CD4-positive, alpha-beta memory T cell (primary cell): ENCODE measurements at regions of chr20 and their contacts with region 1.

Region 1: DNA sequence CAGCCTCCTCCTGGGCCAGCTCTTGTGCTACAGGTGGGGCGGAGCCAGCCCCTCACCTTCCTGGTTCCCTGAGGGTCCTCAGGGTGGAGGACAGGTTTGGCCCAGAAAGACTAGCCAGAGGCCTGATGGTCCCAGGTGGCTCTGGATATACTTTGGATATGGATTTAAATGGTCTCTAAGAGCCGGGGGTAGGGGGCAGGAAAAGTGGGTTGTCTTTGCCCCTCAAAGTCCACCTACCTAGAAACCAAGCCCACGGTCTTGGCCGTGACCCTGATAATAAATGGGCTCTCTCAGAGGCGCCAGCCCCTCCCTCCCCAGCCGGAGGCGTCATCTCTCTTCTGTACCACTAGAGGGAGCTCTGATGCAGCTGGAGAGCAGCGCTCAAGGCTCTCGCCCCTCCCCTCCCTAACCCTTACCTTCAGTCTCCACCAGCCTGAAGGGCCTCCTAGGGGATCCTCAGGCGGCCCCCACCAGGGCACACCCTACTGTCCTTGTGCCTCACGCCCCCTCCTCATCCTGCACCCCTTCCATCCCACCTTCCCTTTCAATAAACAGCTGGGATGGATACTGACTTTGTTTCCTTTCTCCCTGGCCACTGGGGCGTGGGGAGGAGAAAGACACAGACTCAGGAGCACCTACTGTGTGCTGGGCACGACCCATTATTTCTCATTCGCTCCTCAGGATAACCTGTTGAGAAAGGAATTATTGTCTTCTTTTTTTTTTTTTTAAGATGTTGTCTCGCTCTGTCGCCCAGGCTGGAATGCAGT is 7.6 kb downstream of the NRSN2 start:
- DNase-seq: peak; percentile 76 to 83 (median 81)
- H3K4me3 ChIP-seq: no peak overlapping the region
- H3K4me3 Mint-ChIP-seq: peak overlapping the region in 1 of 8 donors; percentile 20
- H3K27ac ChIP-seq: no peak overlapping the region
- H3K27ac Mint-ChIP-seq: no peak overlapping the region
- H3K4me1 ChIP-seq: no peaks in the 10 kb centered on the region
- H3K4me1 Mint-ChIP-seq: peaks cover 0 to 7% (median 4%) of the 10 kb centered on the region in 4 donors
- H3K27me3 ChIP-seq: no peaks in the 10 kb centered on the region
- H3K27me3 Mint-ChIP-seq: no peaks in the 10 kb centered on the region

Region 2: DNA sequence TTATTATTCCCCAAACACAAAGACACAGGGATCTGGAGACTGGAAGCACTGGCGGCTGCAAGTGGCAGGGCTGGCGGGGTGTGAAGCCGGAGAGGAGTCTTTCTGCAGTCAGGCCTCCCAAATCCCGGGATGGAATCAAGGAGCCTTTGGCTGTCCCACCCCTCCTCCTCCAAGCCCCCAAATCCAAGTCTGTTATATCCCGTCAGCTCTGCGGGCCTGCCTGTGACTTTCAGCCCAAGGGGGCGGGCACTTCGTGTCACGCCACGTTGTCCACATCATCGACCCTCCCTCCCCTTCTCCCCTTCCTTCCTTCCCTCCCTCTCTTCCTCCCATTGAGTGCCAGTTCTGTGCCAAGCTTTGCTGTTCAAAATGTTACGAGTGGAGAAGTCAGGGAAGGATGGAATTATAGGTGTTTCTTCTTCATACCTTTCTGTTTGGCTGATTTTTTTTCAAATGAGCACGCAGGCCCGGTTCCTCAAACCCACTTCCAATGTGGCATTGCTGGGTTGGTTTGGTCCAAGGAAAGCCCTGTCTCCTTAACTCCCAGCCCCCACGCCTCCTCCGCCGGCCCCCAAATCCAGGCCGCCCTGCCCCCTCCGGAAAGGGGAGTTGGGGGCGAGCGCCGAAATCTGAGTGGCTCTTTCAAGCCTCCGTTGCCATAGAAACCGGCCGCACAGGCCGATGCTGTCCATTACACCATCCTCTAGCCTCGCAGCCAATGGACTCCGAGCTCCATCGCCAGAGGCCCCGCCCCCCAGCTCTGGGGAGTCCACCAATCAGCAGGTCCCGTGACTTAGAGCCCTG is 44.4 kb before region 1 on chr20:
- CTCF ChIA-PET with region 1: no interaction called
- POLR2A ChIA-PET with region 1: no interaction called
- intact Hi-C with region 1: no loop called
- DNase-seq: peak; percentile 56 to 74 (median 59)
- H3K4me3 ChIP-seq: no peak overlapping the region
- H3K4me3 Mint-ChIP-seq: peak overlapping the region; percentile 49 to 78 (median 68)
- H3K27ac ChIP-seq: no peak overlapping the region
- H3K27ac Mint-ChIP-seq: peak overlapping the region in 5 of 7 donors; percentile 36 to 80 (median 49)
- H3K4me1 ChIP-seq: peaks cover 12% of the 10 kb centered on the region
- H3K4me1 Mint-ChIP-seq: peaks cover 10 to 12% (median 10%) of the 10 kb centered on the region in 4 donors
- H3K27me3 ChIP-seq: no peaks in the 10 kb centered on the region
- H3K27me3 Mint-ChIP-seq: peaks cover 0 to 1% of the 10 kb centered on the region in 2 donors

Region 3: DNA sequence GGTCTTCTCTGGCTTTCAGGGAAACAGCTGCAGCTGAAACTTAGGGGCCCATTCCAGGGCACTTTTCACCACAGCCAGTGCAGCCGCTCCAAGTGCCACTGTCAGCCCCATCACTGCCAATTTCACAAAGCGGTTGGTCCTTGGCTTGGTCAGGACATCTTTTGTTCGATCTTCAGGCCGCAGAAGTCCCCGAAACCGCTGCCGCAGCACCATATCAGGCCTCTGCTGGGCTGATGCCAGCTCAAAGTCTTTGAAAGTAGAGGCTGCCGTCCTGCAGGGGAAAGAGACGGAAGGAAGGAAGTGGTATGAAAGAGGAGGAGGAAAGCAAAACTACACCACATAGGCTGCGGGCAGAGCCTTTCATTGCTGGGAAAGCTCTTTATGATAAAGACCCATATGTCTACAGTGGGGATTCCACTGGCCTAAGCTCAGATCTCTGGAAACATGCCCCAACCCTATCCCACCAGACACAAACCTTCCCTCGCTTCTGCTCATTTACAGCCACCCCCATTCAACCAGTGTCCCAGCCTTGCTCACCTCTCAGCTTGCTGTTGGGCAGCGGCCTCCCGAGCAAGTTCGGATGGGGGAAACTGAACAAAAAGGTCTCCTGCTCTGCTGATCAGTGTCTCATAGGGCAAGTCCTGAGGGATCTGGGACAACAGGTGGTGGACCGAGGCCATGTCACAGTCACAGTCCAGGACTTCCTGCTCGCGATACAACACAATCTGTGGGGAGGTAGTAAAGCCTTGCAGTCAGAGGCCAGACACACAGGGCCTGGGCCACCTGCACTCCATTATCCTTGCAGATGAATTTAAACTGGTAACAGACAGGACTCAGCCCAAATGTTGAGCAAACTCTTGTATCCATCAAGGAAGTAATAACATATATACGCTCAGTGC is 84.3 kb after region 1 on chr20:
- CTCF ChIA-PET with region 1: interaction called, 5 read pairs
- POLR2A ChIA-PET with region 1: no interaction called
- intact Hi-C with region 1: loop called (anchors 2 kb)
- DNase-seq: peak; percentile 66 to 78 (median 75)
- H3K4me3 ChIP-seq: peak overlapping the region; percentile 26
- H3K4me3 Mint-ChIP-seq: peak overlapping the region; percentile 73 to 86 (median 82)
- H3K27ac ChIP-seq: no peak overlapping the region
- H3K27ac Mint-ChIP-seq: peak overlapping the region; percentile 14 to 91 (median 84)
- H3K4me1 ChIP-seq: peaks cover 53% of the 10 kb centered on the region
- H3K4me1 Mint-ChIP-seq: peaks cover 41 to 69% (median 55%) of the 10 kb centered on the region in 4 donors
- H3K27me3 ChIP-seq: no peaks in the 10 kb centered on the region
- H3K27me3 Mint-ChIP-seq: no peaks in the 10 kb centered on the region

Region 4: GRCh38 chr20:478949-479429 is 124.5 kb after region 1 on chr20:
- CTCF ChIA-PET with region 1: interaction called, 132 read pairs
- POLR2A ChIA-PET with region 1: interaction called, 5 read pairs
- intact Hi-C with region 1: loop called (anchors 1 kb)
- DNase-seq: peak; percentile 43 to 72 (median 67)
- H3K4me3 ChIP-seq: no peak overlapping the region
- H3K4me3 Mint-ChIP-seq: no peak overlapping the region
- H3K27ac ChIP-seq: no peak overlapping the region
- H3K27ac Mint-ChIP-seq: peak overlapping the region in 4 of 7 donors; percentile 18 to 48 (median 28)
- H3K4me1 ChIP-seq: peaks cover 21% of the 10 kb centered on the region
- H3K4me1 Mint-ChIP-seq: peaks cover 16 to 28% (median 20%) of the 10 kb centered on the region in 4 donors
- H3K27me3 ChIP-seq: no peaks in the 10 kb centered on the region
- H3K27me3 Mint-ChIP-seq: no peaks in the 10 kb centered on the region

Region 5: DNA sequence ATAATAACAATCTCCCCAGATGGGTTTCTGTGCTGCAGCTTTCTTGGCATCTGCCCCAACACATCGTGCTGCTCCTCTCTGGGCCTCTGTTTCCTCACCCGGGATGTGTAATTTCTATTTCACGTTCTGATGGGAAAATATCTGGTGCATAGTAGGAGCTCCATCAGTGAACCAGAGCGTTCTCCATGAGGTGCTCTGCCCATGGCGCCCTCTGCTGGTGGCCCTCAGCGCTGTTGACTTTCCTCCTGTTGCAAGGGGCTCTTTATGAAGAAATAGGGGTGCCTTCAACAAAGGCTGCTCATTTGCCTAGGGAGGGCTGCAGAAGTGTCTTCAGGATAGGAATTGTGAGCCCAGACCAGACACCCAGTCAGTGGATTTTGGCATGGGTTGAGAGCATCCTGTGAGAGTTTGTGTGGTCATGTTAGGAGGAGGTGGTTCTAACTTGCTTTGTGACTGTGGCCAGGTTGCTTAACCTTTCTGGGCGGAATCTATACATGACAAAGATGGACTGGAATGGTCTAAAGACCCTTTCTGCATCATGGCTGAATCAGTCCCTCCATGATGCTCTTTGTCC is 313.0 kb after region 1 on chr20:
- CTCF ChIA-PET with region 1: interaction called, 7 read pairs
- POLR2A ChIA-PET with region 1: no interaction called
- intact Hi-C with region 1: loop called (anchors 1 kb)
- DNase-seq: peak; percentile 20 to 48 (median 36)
- H3K4me3 ChIP-seq: no peak overlapping the region
- H3K4me3 Mint-ChIP-seq: no peak overlapping the region
- H3K27ac ChIP-seq: no peak overlapping the region
- H3K27ac Mint-ChIP-seq: no peak overlapping the region
- H3K4me1 ChIP-seq: no peaks in the 10 kb centered on the region
- H3K4me1 Mint-ChIP-seq: peaks cover 1 to 12% (median 7%) of the 10 kb centered on the region in 4 donors
- H3K27me3 ChIP-seq: peaks cover 8% of the 10 kb centered on the region
- H3K27me3 Mint-ChIP-seq: peaks cover 49 to 61% of the 10 kb centered on the region in 2 donors